Head of caudate nucleus (tissue), 42 donors: ENCODE measurements at regions of chr16 and their contacts with region 1.

Region 1: GRCh38 chr16:4183237-4184036 is 58.4 kb downstream of the SRL start:
- DNase-seq: peak; percentile 71 to 97 (median 90)

Region 2: DNA sequence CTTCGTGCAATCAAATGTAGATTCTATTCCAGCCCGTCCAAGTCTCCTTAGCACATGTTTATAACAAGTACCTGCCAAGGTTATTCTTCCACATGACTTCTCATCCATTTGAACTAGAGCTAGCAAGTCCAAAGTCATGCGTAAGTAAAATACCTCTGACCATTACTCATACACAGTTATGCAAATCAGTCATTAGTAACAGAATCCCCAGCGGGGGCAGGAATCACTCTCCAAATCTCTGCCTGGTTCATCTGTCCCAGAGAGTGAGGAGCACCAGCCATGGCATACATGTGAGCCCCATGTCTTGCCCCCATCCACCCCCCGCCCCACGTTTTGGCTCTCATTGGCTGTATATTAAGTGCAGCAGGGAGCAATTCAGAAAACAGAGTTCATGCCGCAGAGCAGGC is 30.8 kb after region 1 on chr16:
- intact Hi-C with region 1: no loop called
- DNase-seq: peak in 1 of 42 donors; percentile 27

Region 3: GRCh38 chr16:4253394-4254150 is 70.1 kb after region 1 on chr16:
- intact Hi-C with region 1: loop called (anchors 10 kb)
- DNase-seq: peak; percentile 95 to 100 (median 98)